Aorta (tissue), 5 donors: ENCODE measurements at regions of chr5 and their contacts with region 1.

Region 1: DNA sequence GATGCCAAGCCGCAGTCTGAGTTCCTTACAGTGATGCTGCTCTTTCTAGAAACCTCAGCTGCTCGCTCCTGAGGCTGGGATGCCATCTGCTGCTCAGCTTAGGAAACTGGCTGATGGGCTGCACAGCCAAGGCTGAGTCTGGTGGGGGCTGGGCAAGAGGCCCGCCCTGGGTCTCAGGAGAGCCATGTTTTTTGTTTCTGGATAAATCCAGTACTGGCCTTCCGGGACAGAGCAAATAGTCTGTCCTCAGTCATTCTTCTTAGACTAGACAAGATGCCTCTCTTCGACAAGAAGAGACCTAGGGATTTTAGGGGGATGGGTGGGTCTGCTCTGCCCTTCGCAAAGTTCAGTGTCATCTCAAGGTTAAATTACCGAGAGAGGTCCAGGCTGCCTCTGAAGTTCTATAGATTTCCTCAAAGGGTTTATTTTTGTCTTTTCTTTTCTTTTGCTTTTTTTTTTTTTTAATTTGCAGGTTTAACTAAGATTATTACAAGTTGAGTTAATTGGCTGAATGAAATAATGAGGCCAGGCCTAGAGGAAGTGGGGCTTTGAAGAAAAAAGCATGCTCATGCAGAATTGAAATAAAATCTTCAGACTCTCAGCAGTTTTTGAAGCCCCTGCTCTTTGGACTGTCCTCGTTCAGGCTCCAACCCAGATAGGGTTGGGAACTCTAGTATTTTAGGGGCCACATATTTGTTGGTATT is 30.6 kb upstream of the MATR3 start:
- DNase-seq: peak; percentile 93
- ATAC-seq: peak; percentile 97
- H3K4me3 ChIP-seq: no peak overlapping the region
- H3K27ac ChIP-seq: no peak overlapping the region
- H3K4me1 ChIP-seq: no peaks in the 10 kb centered on the region
- H3K27me3 ChIP-seq: no peaks in the 10 kb centered on the region

Region 2: DNA sequence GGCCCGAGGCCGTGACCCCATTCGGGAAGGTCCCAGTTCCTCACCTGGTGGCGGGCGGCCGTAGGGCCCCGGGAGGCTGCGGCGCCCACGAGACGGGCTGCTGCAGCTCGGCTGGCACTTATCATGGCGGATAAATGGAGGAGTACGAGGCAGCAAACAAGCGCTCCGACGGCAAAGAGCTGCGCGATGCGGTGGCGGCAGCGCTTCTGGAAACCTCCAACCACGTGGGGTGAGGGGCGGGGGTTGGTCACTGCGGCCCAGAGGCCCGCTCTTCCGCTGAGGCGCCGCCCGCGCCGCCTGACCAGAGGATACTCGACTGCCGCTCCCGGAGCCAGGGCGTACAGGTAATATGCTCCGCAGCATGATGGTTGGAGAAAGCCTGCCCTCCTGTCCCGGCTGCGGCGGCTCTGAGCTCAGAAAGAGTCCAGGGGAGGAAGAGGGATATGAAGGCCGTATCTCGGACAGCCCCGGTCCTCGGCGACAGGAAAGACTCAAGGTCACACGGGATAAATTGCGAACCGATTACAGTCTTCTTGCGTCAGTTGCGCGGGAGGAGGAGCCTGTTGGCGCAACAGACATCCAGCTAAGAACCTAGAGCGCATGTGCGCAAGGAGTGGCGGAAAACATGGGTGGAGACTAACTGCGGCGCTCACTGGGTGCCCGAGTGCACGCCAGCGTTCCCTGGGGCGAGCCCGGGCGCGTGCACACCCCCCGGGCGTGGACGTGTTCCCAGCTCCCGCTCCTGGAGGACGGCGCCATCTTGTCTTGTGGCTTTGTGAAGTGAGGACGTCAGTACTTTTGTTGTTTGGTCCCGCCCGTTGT is 687.5 kb before region 1 on chr5 and contains the start of gene HSPA9:
- intact Hi-C with region 1: loop called (anchors 5 kb)
- DNase-seq: peak; percentile 98 to 99
- ATAC-seq: peak; percentile 98
- H3K4me3 ChIP-seq: peak within 1 kb of the TSS; percentile 93 to 97
- H3K27ac ChIP-seq: peak within 1 kb of the TSS; percentile 62 to 96
- H3K4me1 ChIP-seq: peaks cover 0 to 2% of the 10 kb centered on the region in 2 donors
- H3K27me3 ChIP-seq: no peaks in the 10 kb centered on the region
- total RNA-seq, gene HSPA9: 110 to 139 TPM

Region 3: DNA sequence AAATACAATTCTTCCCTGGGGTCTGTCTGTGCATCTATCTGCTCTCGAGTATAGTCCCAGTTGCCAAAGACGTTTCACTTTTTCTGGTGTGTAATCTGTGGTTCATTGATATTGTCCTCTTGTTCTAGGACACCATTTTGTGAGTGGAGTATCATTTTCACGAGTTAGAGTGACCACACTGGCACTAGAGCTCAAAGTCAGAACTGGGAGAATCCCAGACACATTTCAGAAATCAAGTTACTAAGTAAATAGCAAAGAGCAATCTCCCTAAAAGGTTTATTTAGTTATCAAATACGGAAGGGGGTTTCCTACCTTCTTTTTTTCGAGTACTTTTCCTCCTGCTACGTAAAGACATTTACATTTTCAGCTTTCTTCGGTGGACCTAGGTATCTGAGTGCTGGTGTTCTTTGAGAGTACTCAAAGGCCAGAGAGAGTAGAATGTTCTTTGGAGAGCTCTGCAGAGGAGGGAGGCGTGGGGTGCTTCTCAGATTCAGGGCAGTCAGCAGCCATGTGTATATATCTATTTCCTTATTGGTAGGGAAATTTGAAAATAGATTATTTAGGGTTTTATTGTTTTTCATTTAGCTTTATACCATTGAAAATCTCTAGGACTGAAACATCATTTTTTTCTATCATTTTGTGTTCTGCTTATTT is 678.8 kb before region 1 on chr5:
- intact Hi-C with region 1: loop called (anchors 5 kb)
- DNase-seq: no peak
- ATAC-seq: no peak
- H3K4me3 ChIP-seq: no peak overlapping the region
- H3K27ac ChIP-seq: no peak overlapping the region
- H3K4me1 ChIP-seq: no peaks in the 10 kb centered on the region
- H3K27me3 ChIP-seq: no peaks in the 10 kb centered on the region

Region 4: DNA sequence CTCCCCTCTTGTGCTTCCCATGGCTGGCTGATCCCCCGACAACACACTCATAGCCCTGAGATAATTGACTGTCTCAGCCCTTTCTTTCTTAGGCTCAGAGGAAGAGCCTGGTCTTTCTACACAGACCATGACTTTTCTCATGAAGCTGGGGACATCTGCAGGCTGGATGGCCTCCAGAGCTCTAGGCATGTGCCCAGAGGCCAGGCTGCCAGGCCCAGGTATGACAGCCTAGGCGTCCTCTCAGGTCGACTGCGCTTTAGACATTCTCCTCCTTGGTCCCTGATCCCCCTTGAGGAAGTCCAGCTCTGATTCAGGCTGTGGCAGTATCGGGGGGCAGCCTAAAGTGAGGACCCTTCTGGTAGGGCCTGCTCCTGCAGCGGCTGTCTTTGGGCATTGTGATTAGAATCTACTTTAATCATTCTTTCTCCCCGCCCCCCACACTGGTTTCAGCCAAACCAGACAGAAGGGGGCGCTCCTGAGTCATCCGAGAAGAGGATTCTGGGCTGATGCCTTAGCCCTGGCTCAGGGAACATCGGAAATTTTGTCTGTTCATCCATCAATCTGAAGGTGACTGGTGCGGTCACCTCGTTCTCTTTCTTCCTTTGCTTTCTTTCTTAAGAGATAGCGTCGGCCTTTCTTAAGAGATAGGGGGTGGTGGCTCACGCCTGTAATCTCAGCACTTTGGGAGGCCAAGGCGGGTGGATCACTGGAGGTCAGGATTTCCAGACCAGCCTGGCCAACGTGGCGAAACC is 621.2 kb before region 1 on chr5:
- intact Hi-C with region 1: loop called in 1 of 2 experiments (anchors 5 kb)
- DNase-seq: peak; percentile 80 to 88
- ATAC-seq: no peak
- H3K4me3 ChIP-seq: no peak overlapping the region
- H3K27ac ChIP-seq: no peak overlapping the region
- H3K4me1 ChIP-seq: no peaks in the 10 kb centered on the region
- H3K27me3 ChIP-seq: no peaks in the 10 kb centered on the region

Region 5: GRCh38 chr5:139091439-139092156 is 171.3 kb before region 1 on chr5:
- intact Hi-C with region 1: loop called (anchors 1 to 2 kb)
- DNase-seq: no peak
- ATAC-seq: peak; percentile 84
- H3K4me3 ChIP-seq: no peak overlapping the region
- H3K27ac ChIP-seq: no peak overlapping the region
- H3K4me1 ChIP-seq: peaks cover 0 to 2% of the 10 kb centered on the region in 2 donors
- H3K27me3 ChIP-seq: no peaks in the 10 kb centered on the region

Region 6: DNA sequence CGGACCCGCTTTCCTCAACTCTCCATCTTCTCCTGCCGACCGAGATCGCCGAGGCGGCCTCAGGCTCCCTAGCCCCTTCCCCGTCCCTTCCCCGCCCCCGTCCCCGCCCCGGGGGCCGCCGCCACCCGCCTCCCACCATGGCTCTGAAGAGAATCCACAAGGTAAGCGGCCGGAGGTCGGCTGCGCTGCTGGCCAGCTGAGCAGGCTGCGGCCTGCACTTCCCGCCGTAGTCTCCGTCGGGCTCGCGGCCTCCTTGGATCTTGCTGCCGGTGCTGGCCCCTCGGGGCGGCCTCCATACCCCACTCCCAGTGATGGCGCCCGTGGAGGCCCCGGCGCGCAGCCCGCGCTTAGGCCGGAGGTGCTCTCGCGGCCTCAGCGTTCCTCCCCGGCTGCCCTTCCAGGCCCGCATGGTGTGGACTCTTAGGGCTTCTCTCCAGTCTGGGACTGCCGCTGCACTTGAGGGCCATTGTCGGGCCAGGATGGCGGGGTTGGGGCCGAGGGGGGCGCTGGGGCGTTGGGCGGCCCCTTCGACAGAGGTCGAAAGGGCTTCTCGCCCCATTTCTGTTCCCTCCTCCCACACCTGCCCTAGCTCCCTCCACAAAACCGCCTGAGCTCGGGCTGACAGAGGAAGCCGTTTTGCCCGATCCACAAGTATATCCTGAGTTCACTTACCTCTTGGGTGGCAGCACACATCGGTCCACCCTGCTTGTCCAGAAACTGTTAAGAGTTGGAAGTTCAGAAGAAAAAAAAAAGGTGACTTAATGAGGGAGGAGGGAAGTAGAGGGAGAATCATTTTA is 299.0 kb after region 1 on chr5:
- intact Hi-C with region 1: no loop called
- DNase-seq: peak; percentile 64 to 88
- ATAC-seq: peak; percentile 69
- H3K4me3 ChIP-seq: peak overlapping the region; percentile 87 to 98
- H3K27ac ChIP-seq: peak overlapping the region; percentile 87 to 88
- H3K4me1 ChIP-seq: no peaks in the 10 kb centered on the region
- H3K27me3 ChIP-seq: no peaks in the 10 kb centered on the region